ENCODE measurements at regions of chr7 and their contacts with region 1.

Region 1: DNA sequence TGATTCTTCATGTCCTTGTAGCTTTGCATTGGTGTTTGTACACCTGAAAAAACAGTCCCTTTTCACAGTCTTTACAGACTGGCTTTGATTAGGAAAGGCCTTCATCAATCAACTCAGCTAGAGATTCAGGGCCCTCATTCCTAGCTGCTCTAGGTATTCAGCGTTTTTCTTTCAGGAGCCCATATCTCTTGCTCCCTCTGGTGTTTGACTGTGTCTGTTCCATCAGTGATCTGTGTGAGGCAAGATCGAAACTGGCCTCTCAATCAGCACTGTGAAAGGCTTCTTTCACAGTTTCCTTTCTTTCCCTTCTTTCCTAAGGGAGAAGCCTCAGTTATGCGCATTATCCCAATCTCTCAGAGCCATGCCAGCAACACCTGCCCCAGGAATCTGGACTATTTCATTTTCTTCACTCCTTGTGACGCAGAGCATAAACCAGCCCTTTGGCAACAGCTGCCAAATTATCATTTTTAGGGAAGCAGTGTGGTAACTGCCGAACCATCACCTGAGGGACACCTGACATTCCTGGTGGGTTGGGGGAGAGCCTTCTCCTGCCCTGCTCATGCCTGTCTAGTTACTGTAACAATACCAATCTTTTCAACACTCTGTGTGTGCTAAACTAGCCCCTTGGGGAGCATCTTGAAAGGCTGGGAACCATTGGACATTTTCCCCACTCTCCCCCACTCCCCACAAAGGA is 75.7 kb upstream of the CCDC71L start:
- DNase-seq: peak; percentile 56
- ATAC-seq: peak; percentile 94
- H3K4me3 Mint-ChIP-seq: no peak overlapping the region
- H3K27ac Mint-ChIP-seq: peak overlapping the region; percentile 63
- H3K4me1 Mint-ChIP-seq: peaks cover 28% of the 10 kb centered on the region
- H3K27me3 Mint-ChIP-seq: no peaks in the 10 kb centered on the region
- CTCF ChIP-seq: peak; percentile 74

Region 2: GRCh38 chr7:106659963-106660861 is 76.4 kb before region 1 on chr7:
- CTCF ChIA-PET with region 1: interaction called, 138 read pairs
- POLR2A ChIA-PET with region 1: interaction called, 13 read pairs
- intact Hi-C with region 1: loop called (anchors 1 kb)
- DNase-seq: peak; percentile 92
- ATAC-seq: peak; percentile 66
- H3K4me3 Mint-ChIP-seq: peak overlapping the region; percentile 87
- H3K27ac Mint-ChIP-seq: peak overlapping the region; percentile 93
- H3K4me1 Mint-ChIP-seq: peaks cover 31% of the 10 kb centered on the region
- H3K27me3 Mint-ChIP-seq: no peaks in the 10 kb centered on the region
- CTCF ChIP-seq: peak; percentile 88

Region 3: GRCh38 chr7:106693677-106694353 is 42.8 kb before region 1 on chr7:
- CTCF ChIA-PET with region 1: interaction called, 16 read pairs
- POLR2A ChIA-PET with region 1: no interaction called
- intact Hi-C with region 1: no loop called
- DNase-seq: no peak
- ATAC-seq: no peak
- H3K4me3 Mint-ChIP-seq: no peak overlapping the region
- H3K27ac Mint-ChIP-seq: no peak overlapping the region
- H3K4me1 Mint-ChIP-seq: peaks cover 17% of the 10 kb centered on the region
- H3K27me3 Mint-ChIP-seq: no peaks in the 10 kb centered on the region
- CTCF ChIP-seq: no peak

Region 4: DNA sequence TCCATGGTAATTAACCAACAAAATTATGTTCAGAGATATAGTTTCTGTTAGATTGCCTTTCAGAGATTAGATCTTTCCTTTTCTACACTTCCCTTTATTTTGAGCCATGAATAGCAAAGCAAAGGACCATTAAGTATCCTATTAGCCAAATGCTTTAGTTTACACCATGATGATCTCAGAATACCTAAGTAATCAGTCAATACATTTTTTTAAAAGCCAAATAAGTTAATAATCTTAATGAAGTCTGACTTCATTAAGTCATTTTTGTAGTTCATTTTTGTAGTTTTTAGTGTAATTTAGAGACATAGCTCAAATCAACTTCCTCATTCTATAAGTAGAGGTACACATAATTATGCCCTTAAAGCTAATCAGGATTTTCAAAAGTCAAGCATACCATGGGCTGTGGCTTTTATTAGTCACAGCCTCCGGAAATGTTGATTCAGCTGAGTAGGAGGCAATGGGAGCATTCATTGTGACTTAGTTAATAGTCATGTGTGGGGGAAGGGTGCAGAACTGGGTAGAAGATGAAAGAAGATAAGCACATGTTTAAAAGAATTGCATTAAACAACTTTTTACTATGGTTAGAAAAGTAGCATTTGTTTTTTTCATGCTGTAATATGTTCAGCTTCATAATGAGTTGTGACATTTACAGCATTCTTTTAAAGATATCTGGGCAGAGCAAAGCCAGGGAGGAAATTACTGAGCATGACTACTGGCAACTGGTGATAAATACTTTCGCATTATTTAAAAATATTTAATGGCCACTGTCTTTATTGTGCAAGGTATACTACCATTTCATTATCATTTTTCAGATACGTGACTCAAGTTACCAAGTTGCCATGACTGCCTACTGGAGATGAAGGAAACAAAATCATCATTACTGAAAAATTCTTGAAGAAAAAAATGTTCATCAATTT is 18.4 kb before region 1 on chr7:
- CTCF ChIA-PET with region 1: interaction called, 14 read pairs
- POLR2A ChIA-PET with region 1: interaction called, 5 read pairs
- intact Hi-C with region 1: no loop called
- DNase-seq: peak; percentile 94
- ATAC-seq: peak; percentile 96
- H3K4me3 Mint-ChIP-seq: no peak overlapping the region
- H3K27ac Mint-ChIP-seq: no peak overlapping the region
- H3K4me1 Mint-ChIP-seq: peaks cover 15% of the 10 kb centered on the region
- H3K27me3 Mint-ChIP-seq: peaks cover 2% of the 10 kb centered on the region
- CTCF ChIP-seq: no peak

Measured in activated CD8-positive, alpha-beta T cell treated with anti-CD3 and anti-CD28 coated beads for 36 hours (primary cell).